ENCODE measurements at regions of chr18 and their contacts with region 1.

Region 1: GRCh38 chr18:1222880-1223279 is 318.2 kb downstream of the ADCYAP1 start:
- DNase-seq: no peak
- ATAC-seq: no peak
- H3K4me3 ChIP-seq: no peak overlapping the region
- H3K27ac ChIP-seq: no peak overlapping the region
- H3K4me1 ChIP-seq: no peaks in the 10 kb centered on the region
- H3K27me3 ChIP-seq: peaks cover 5% of the 10 kb centered on the region; the same call in 1 of the 2 replicates
- CTCF ChIP-seq: no peak
- POLR2A ChIP-seq: no peak
- RAD21 ChIP-seq: no peak

Region 2: DNA sequence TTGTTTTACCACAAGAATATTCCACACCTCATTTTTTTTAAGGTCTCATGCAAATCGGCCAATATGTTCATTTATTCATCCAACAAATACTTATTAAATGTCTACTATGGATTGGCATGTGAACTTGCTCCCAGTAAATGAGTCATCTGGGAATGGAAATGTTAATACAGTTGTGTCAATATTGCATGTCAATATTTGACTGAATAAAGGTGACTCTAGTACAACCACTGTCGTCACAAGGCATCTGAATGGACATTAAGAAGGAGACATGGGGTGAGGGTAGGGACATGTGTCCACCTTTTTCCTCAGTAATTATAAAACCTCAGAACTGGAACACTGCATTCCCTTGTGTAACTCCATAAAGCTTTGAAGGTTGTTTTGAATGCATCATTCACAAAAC is 47.2 kb after region 1 on chr18:
- CTCF ChIA-PET with region 1: no interaction called
- POLR2A ChIA-PET with region 1: no interaction called
- RAD21 ChIA-PET with region 1: no interaction called
- intact Hi-C with region 1: loop called (anchors 5 kb)
- DNase-seq: no peak
- ATAC-seq: no peak
- H3K4me3 ChIP-seq: no peak overlapping the region
- H3K27ac ChIP-seq: no peak overlapping the region
- H3K4me1 ChIP-seq: no peaks in the 10 kb centered on the region
- H3K27me3 ChIP-seq: no peaks in the 10 kb centered on the region
- CTCF ChIP-seq: no peak
- POLR2A ChIP-seq: no peak
- RAD21 ChIP-seq: no peak

Region 3: GRCh38 chr18:2049986-2050385 is 827.1 kb after region 1 on chr18:
- CTCF ChIA-PET with region 1: no interaction called
- POLR2A ChIA-PET with region 1: no interaction called
- RAD21 ChIA-PET with region 1: no interaction called
- intact Hi-C with region 1: no loop called
- DNase-seq: no peak
- ATAC-seq: no peak
- H3K4me3 ChIP-seq: no peak overlapping the region
- H3K27ac ChIP-seq: no peak overlapping the region
- H3K4me1 ChIP-seq: peaks cover 0 to 12% of the 10 kb centered on the region in 2 experiments; a peak in 2 of 4 replicates
- H3K27me3 ChIP-seq: no peaks in the 10 kb centered on the region
- CTCF ChIP-seq: no peak
- POLR2A ChIP-seq: no peak
- RAD21 ChIP-seq: no peak

Measured in HCT116 (cell line).